ENCODE measurements at regions of chr12 and their contacts with region 1.

Region 1: GRCh38 chr12:43882578-43883178 is 46.8 kb downstream of the TMEM117 start:
- DNase-seq: peak; percentile 15 to 45
- H3K4me3 ChIP-seq: no peak overlapping the region
- H3K27ac ChIP-seq: no peak overlapping the region
- H3K4me1 ChIP-seq: no peaks in the 10 kb centered on the region
- H3K27me3 ChIP-seq: no peaks in the 10 kb centered on the region
- CTCF ChIP-seq: peak; percentile 84

Region 2: GRCh38 chr12:43349863-43350262 is 532.8 kb before region 1 on chr12:
- CTCF ChIA-PET with region 1: interaction called, 4 read pairs
- POLR2A ChIA-PET with region 1: no interaction called
- intact Hi-C with region 1: loop called (anchors 2 kb)
- DNase-seq: no peak
- H3K4me3 ChIP-seq: no peak overlapping the region
- H3K27ac ChIP-seq: no peak overlapping the region
- H3K4me1 ChIP-seq: no peaks in the 10 kb centered on the region
- H3K27me3 ChIP-seq: no peaks in the 10 kb centered on the region
- CTCF ChIP-seq: peak; percentile 55

Region 3: DNA sequence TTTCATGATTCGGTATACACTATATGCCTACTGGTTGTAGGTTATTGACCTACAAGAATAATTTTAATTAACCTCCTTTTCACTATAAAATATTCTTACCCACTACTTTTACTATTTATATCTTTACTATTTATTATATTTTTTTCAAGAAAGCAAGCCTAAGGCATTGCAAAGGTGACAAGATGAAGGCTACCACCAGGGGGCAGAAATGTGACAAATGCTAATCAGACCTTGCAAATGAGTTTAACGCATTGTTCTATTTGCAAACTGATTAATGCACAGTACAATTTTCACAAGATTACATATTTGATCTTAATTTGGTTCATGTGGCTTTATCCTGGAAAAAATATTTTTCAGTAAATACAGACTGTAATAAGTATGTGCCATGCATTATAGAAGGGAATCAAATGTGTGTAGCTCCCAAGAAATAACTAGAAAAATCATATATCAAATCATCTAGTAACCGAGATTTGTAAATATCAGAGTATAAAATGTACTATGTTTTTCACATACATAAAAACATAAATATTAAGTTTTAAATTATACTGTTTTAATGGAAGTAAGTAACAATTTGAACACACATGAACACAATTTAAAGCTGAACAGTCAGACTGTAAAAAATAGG is 437.6 kb before region 1 on chr12:
- CTCF ChIA-PET with region 1: no interaction called
- POLR2A ChIA-PET with region 1: no interaction called
- intact Hi-C with region 1: loop called (anchors 5 kb)
- DNase-seq: peak in 1 of 2 experiments; percentile 42
- H3K4me3 ChIP-seq: no peak overlapping the region
- H3K27ac ChIP-seq: no peak overlapping the region
- H3K4me1 ChIP-seq: no peaks in the 10 kb centered on the region
- H3K27me3 ChIP-seq: no peaks in the 10 kb centered on the region
- CTCF ChIP-seq: peak; percentile 90

Region 4: GRCh38 chr12:43501703-43502102 is 381.0 kb before region 1 on chr12:
- CTCF ChIA-PET with region 1: no interaction called
- POLR2A ChIA-PET with region 1: no interaction called
- intact Hi-C with region 1: loop called (anchors 1 kb)
- DNase-seq: no peak
- H3K4me3 ChIP-seq: no peak overlapping the region
- H3K27ac ChIP-seq: no peak overlapping the region
- H3K4me1 ChIP-seq: no peaks in the 10 kb centered on the region
- H3K27me3 ChIP-seq: no peaks in the 10 kb centered on the region
- CTCF ChIP-seq: peak; percentile 69

Region 5: DNA sequence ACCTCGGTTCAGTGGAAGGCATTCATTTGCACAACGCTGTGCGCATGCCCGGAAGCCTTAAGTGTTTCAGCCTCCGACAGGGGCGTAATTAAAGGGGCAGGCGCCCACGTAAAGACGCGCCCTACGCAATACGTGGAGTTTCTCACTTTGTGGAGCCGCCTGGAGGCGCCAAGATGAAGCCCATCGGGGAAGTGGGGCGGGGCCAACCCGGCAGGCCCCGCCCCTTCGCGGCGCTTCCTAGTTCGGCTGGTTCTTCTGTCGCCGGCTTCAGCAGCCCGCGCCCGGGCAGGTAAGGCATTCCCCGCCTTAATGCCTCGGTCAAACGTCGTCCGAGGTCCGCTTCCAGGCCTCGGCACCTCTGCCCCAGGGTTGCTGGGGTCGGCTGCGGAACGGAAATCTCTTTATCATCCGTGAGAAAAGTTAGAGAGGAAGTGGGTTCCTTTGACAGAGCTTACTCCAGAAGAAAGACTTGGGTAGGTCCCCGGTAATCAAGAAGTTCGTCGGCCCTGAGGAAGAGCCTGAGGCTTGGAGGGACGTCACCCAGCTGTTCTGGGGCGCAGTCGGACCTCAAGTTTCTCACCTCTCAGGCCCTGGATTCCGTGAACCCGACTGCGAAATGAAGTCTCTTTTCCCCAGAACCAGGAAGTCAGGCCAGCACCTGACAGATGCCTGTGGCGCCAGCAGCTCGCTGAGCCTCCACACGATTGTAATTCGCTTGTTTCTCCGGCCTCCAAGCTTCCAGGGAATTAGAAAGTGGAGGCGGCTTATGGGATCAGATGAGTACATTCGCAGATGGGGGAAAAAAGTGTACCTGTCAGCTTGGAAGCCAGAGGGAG is 123.7 kb before region 1 on chr12 and contains the starts of genes IRAK4 and PUS7L:
- CTCF ChIA-PET with region 1: interaction called, 4 read pairs
- POLR2A ChIA-PET with region 1: no interaction called
- intact Hi-C with region 1: loop called (anchors 1 kb)
- DNase-seq: peak; percentile 89 to 92
- H3K4me3 ChIP-seq: peak within 1 kb of the TSS; percentile 83
- H3K27ac ChIP-seq: peak within 1 kb of the TSS; percentile 71
- H3K4me1 ChIP-seq: peaks cover 39% of the 10 kb centered on the region
- H3K27me3 ChIP-seq: no peaks in the 10 kb centered on the region
- CTCF ChIP-seq: peak; percentile 43; the same call in 1 of the 2 replicates
- total RNA-seq, gene IRAK4: 10.0 and 10.1 TPM in 2 replicates
- total RNA-seq, gene PUS7L: 14.7 and 15.7 TPM in 2 replicates

Region 6: GRCh38 chr12:43776498-43776897 is 106.2 kb before region 1 on chr12:
- CTCF ChIA-PET with region 1: interaction called, 13 read pairs
- POLR2A ChIA-PET with region 1: no interaction called
- intact Hi-C with region 1: loop called (anchors 1 kb)
- DNase-seq: no peak
- H3K4me3 ChIP-seq: no peak overlapping the region
- H3K27ac ChIP-seq: no peak overlapping the region
- H3K4me1 ChIP-seq: no peaks in the 10 kb centered on the region
- H3K27me3 ChIP-seq: no peaks in the 10 kb centered on the region
- CTCF ChIP-seq: peak; percentile 68

Region 7: DNA sequence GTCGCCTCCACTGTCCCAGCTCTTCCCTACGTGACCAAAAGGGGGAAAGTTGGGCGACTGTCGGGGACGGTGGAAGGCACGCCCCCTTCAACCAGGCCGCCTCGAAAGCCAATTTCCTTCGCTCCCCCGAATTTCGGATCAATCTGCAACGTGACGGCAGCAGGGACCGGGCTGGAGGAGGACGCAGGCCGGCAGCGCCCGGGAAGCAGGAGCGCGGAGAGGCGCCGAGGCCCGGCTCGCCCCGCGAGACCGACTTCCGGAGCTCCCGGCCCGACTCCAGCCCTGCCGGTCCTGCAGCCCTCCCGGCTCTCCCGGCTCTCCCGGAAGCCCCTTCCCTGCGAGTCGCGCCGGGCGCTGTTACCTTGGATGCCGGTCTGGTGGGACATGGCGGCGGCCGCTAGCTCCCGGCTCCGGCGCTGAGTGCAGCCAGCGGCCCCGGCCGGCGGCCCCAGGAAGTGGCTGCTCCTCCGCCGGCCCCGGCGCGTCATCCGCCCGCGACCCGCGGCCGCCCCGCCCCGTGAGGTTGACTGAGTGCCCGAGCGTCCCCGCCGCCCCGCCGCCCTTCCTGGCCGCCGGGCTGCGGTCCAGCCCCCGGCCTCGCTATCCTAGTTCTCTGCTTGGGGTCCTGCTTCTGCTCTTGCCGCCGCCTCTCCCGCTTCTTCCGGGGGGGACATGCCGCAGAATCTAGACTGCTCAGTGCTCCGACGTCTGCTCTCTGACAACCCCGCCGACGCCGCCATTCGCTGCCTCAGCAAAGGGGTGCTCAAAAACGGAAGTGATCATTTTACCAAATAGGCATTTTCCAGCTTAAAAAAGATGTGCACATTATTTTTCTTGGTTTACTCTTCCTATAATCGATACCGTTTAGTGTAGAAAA is 76.6 kb before region 1 on chr12 and contains the start of gene TWF1:
- CTCF ChIA-PET with region 1: no interaction called
- POLR2A ChIA-PET with region 1: interaction called, 5 read pairs
- intact Hi-C with region 1: loop called (anchors 5 kb)
- DNase-seq: peak; percentile 55 to 82
- H3K4me3 ChIP-seq: peak within 1 kb of the TSS; percentile 94
- H3K27ac ChIP-seq: peak within 1 kb of the TSS; percentile 76
- H3K4me1 ChIP-seq: peaks cover 28% of the 10 kb centered on the region
- H3K27me3 ChIP-seq: no peaks in the 10 kb centered on the region
- CTCF ChIP-seq: peak; percentile 46; the same call in 1 of the 2 replicates
- total RNA-seq, gene TWF1: 54.5 and 85.9 TPM in 2 replicates

Region 8: DNA sequence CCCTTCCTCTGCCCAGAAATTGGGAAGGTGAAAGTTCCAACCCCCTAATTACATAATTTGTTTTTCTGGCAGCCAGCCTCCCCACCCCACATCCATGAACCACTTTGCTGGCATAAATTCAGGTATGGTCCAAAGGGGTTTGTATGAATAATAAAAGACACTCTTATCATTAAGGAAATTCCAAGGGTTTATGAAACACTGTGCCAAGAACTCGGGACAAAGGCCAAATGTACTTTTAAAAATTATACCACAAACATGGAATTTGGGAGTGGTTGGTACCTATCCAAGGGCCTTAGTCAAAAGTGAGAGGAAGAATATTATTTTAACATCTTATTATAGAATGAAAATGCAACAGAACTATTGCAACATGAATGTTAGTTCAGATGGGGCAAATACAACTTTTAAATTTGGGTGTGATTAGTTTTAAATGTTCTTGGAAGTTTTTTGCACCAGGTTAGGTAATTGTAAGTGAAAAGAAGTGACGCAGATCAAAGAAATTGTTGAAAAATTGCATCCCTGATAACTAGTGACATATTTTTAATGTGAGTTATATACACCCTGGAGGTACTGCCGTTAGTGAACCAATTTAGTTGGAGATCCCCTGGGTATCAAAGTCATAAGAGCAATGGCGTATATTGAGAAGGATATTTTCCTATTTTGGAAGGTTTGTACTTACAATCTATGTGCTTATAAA is 171.0 kb after region 1 on chr12:
- CTCF ChIA-PET with region 1: no interaction called
- POLR2A ChIA-PET with region 1: no interaction called
- intact Hi-C with region 1: no loop called
- DNase-seq: no peak
- H3K4me3 ChIP-seq: no peak overlapping the region
- H3K27ac ChIP-seq: no peak overlapping the region
- H3K4me1 ChIP-seq: no peaks in the 10 kb centered on the region
- H3K27me3 ChIP-seq: no peaks in the 10 kb centered on the region
- CTCF ChIP-seq: no peak

Region 9: GRCh38 chr12:44157359-44157758 is 274.7 kb after region 1 on chr12:
- CTCF ChIA-PET with region 1: no interaction called
- POLR2A ChIA-PET with region 1: no interaction called
- intact Hi-C with region 1: no loop called
- DNase-seq: no peak
- H3K4me3 ChIP-seq: no peak overlapping the region
- H3K27ac ChIP-seq: no peak overlapping the region
- H3K4me1 ChIP-seq: no peaks in the 10 kb centered on the region
- H3K27me3 ChIP-seq: no peaks in the 10 kb centered on the region
- CTCF ChIP-seq: no peak